H1 (cell line): ENCODE measurements at regions of chr5 and their contacts with region 1.

Region 1: GRCh38 chr5:54401515-54401914 is 54.0 kb upstream of the HSPB3 start:
- DNase-seq: no peak
- H3K4me3 ChIP-seq: no peak overlapping the region
- H3K27ac ChIP-seq: no peak overlapping the region
- H3K4me1 ChIP-seq: peaks cover 0 to 3% (median 0%) of the 10 kb centered on the region in 4 experiments; a peak in 1 of 7 replicates
- H3K27me3 ChIP-seq: no peaks in the 10 kb centered on the region
- CTCF ChIP-seq: no peak
- EP300 ChIP-seq: no peak
- POLR2A ChIP-seq: no peak
- RAD21 ChIP-seq: no peak

Region 2: GRCh38 chr5:54415896-54416601 is 14.5 kb after region 1 on chr5:
- CTCF ChIA-PET with region 1: interaction called, 15 read pairs
- POLR2A ChIA-PET with region 1: no interaction called
- DNase-seq: no peak
- H3K4me3 ChIP-seq: no peak overlapping the region
- H3K27ac ChIP-seq: no peak overlapping the region
- H3K4me1 ChIP-seq: no peaks in the 10 kb centered on the region
- H3K27me3 ChIP-seq: no peaks in the 10 kb centered on the region
- CTCF ChIP-seq: no peak
- EP300 ChIP-seq: no peak
- POLR2A ChIP-seq: no peak
- RAD21 ChIP-seq: no peak